OCI-LY7 (cell line): ENCODE measurements at regions of chr6 and their contacts with region 1.

Region 1: DNA sequence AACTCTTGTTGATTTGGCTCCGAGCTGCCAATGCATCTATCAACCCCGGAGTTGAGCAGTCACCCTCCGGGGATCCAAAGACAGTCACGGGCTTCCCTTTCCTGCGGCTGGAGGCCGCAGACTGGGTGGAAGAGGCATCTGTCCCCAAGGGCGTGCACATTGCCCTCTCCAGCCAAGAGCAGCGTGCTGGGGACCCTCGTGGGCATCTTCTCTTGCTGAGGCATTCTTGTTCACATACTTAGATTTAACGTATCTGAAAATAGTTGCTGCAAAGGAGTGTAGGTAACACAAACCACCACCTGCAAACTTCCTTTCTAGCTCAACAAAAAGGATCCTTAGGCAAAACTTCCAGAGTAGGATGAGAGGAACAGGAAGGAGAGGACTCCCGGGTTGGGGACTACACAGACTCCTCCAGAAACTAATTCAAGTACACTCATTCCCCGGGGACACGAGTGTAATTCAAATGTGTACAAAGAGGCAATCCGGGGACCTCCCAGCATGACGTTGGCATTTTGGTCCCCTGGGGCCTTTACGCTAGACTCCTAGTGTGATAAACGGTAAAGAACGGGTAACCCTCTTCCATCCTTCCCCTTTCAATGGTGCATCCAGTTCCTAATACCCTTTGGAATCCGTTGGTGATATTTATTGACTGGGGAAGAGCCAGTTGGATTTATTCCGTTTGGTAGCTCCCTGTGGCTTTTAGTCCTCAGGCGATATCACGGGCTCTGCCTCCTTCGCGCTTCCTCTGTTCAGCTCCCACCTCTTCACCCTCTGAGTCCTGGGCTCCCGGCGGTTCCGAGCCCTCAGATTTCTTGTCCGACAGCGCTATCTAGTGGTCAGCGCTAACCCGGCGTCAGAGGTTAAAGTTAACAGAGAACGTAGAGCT is 2.7 kb upstream of the COL12A1 start:
- DNase-seq: peak; percentile 78
- H3K4me3 ChIP-seq: no peak overlapping the region
- H3K27ac ChIP-seq: no peak overlapping the region
- H3K4me1 ChIP-seq: no peaks in the 10 kb centered on the region
- CTCF ChIP-seq: peak; percentile 97

Region 2: DNA sequence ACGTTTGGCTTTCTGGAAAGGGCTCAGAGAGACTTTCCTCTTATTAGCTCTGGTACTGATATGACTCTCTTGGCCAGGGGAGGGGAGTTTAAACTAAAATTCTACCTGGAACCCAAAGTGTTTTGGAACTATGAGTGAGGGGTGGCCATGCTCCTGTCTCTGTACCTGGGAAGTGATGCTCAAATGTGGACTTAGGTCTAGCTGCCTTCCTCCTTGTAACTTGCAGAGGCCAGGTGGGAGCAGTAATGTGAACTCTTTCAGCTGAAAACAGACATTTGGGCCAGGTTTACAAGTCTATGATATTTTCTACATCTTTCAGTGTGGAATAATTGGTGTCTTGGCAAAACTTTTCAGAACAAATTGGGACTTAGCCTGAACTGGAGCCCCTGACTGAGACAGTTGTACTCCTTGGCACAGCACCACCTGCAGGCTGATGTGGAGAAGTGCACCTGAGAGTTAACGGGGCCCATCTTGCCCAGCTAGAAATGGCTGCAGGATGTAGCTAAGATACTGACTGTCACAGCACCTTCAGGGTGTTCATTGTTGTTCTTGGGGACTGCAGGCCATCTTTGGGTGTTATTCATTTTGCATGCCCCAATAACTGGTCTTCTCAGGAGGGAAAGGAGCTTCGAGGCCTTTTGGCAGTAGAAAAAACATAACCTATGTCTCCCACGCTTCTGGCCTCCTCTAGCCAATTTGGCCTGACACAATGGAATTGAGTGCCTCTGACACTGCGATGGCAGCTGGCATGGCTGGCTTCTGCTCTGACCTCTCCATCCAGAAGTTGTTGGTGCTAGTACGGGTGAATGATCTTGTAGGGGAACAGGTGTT is 1475.5 kb before region 1 on chr6:
- CTCF ChIA-PET with region 1: no interaction called
- POLR2A ChIA-PET with region 1: no interaction called
- intact Hi-C with region 1: loop called (anchors 2 kb)
- DNase-seq: peak; percentile 70
- H3K4me3 ChIP-seq: no peak overlapping the region
- H3K27ac ChIP-seq: no peak overlapping the region
- H3K4me1 ChIP-seq: no peaks in the 10 kb centered on the region
- CTCF ChIP-seq: peak; percentile 94

Region 3: GRCh38 chr6:73854998-73855718 is 1353.4 kb before region 1 on chr6:
- CTCF ChIA-PET with region 1: interaction called, 3 read pairs
- POLR2A ChIA-PET with region 1: no interaction called
- intact Hi-C with region 1: loop called (anchors 5 kb)
- DNase-seq: peak; percentile 58
- H3K4me3 ChIP-seq: no peak overlapping the region
- H3K27ac ChIP-seq: no peak overlapping the region
- H3K4me1 ChIP-seq: no peaks in the 10 kb centered on the region
- CTCF ChIP-seq: peak; percentile 95

Region 4: GRCh38 chr6:73969971-73970970 is 1238.3 kb before region 1 on chr6:
- CTCF ChIA-PET with region 1: no interaction called
- POLR2A ChIA-PET with region 1: no interaction called
- intact Hi-C with region 1: loop called (anchors 5 kb)
- DNase-seq: peak; percentile 45
- H3K4me3 ChIP-seq: no peak overlapping the region
- H3K27ac ChIP-seq: no peak overlapping the region
- H3K4me1 ChIP-seq: no peaks in the 10 kb centered on the region
- CTCF ChIP-seq: peak; percentile 80

Region 5: GRCh38 chr6:74091136-74091793 is 1117.3 kb before region 1 on chr6:
- CTCF ChIA-PET with region 1: interaction called, 4 read pairs
- POLR2A ChIA-PET with region 1: no interaction called
- intact Hi-C with region 1: loop called (anchors 5 kb)
- DNase-seq: peak; percentile 45
- H3K4me3 ChIP-seq: no peak overlapping the region
- H3K27ac ChIP-seq: no peak overlapping the region
- H3K4me1 ChIP-seq: no peaks in the 10 kb centered on the region
- CTCF ChIP-seq: peak; percentile 89

Region 6: GRCh38 chr6:74720923-74721322 is 487.6 kb before region 1 on chr6:
- CTCF ChIA-PET with region 1: no interaction called
- POLR2A ChIA-PET with region 1: no interaction called
- intact Hi-C with region 1: no loop called
- DNase-seq: no peak
- H3K4me3 ChIP-seq: no peak overlapping the region
- H3K27ac ChIP-seq: no peak overlapping the region
- H3K4me1 ChIP-seq: no peaks in the 10 kb centered on the region
- CTCF ChIP-seq: no peak